ENCODE measurements at regions of chr14 and their contacts with region 1.

Region 1: DNA sequence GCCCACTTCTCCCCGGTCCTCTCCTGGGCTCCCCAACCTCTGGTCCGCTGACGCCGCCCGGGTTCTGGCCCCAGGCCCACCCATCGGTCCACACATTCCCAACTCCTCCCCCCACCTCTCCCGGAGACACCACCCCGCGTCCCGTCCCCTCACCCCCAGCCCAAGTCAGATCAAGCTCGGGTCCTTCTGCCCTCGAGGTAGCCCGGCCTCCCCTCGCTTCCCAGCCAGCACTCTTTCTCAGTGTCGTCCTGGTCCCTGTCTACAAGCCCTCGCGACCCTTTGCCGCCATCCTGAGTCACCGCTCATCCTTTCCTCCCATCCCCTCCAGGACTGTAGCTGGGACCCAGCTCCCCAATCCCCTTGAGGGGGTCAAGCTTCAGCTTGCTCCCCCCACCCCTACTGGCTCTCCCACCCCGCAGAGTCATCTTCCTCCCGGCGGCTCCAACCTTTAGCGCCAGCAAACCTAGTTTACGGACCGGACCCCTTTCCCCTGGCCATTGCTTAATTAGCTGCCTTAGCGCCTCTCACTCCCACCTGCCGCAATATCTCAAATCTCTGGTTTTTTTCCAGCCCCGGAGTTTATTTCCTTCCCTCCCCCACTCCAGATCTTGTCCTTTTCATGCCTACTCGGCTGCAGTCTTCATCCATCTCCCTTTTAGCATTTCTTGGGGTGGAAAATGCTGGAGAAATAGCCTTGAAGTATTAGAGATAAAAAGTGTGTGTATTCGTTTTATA is 1.1 kb downstream of the PPP4R4 start:
- DNase-seq: no peak
- H3K4me3 ChIP-seq: no peak overlapping the region
- H3K27ac ChIP-seq: no peak overlapping the region
- H3K4me1 ChIP-seq: no peaks in the 10 kb centered on the region
- H3K27me3 ChIP-seq: peaks cover 27% of the 10 kb centered on the region
- CTCF ChIP-seq: no peak

Region 2: GRCh38 chr14:94021001-94021400 is 154.2 kb before region 1 on chr14:
- intact Hi-C with region 1: no loop called
- DNase-seq: no peak
- H3K4me3 ChIP-seq: no peak overlapping the region
- H3K27ac ChIP-seq: no peak overlapping the region
- H3K4me1 ChIP-seq: no peaks in the 10 kb centered on the region
- H3K27me3 ChIP-seq: no peaks in the 10 kb centered on the region
- CTCF ChIP-seq: no peak

Region 3: DNA sequence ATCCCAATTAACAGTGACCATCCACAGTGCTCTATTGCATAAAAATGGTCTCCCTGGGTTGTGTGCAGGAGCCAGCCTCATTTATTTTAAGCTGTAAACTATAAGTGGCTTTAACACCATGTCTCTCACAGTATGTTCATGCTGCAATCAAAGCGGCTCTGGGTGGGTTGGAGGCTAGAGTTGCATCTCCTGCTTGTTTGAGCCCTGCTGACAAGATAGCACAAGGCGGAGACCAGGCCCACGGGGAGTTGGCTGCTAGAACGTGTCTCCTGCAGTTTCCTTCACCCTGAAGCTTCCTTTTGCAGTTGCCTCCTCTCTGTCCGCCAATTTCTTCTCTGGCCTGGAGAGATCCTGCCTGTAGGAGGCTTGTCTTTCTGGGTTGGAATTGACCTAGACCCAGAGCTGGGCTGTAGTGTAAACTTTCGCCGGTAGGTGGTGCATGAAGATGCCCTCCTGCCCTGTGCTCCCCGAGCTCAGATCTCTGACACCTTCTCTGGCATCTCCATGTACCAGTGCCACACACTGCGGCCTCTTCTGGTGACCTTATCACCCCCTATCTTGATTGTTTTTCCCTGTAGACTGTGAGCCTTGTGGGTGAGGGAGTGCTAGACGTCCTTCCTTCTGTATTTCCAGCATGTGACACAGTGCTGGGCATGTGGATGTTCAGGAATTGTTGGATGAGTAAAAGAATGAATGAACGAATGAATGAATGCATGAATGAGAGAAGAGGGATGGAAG is 138.7 kb before region 1 on chr14:
- intact Hi-C with region 1: loop called (anchors 5 kb)
- DNase-seq: peak; percentile 81
- H3K4me3 ChIP-seq: no peak overlapping the region
- H3K27ac ChIP-seq: no peak overlapping the region
- H3K4me1 ChIP-seq: no peaks in the 10 kb centered on the region
- H3K27me3 ChIP-seq: no peaks in the 10 kb centered on the region
- CTCF ChIP-seq: peak; percentile 79

Region 4: GRCh38 chr14:94136575-94137331 is 38.4 kb before region 1 on chr14:
- intact Hi-C with region 1: loop called (anchors 5 kb)
- DNase-seq: peak; percentile 90
- H3K4me3 ChIP-seq: no peak overlapping the region
- H3K27ac ChIP-seq: no peak overlapping the region
- H3K4me1 ChIP-seq: no peaks in the 10 kb centered on the region
- H3K27me3 ChIP-seq: no peaks in the 10 kb centered on the region
- CTCF ChIP-seq: peak; percentile 98

Measured in colonic mucosa (tissue), 4 donors.